Activated CD4-positive, alpha-beta T cell treated with anti-CD3 and anti-CD28 coated beads, Interleukin-2, amount 10 ng/mL, durations not matched to agents 24 days and 14 days (primary cell): ENCODE measurements at regions of chr11 and their contacts with region 1.

Region 1: GRCh38 chr11:5767056-5767455 is 13.0 kb downstream of the OR52N4 start:
- DNase-seq: no peak
- H3K4me3 Mint-ChIP-seq: no peak overlapping the region
- H3K27ac Mint-ChIP-seq: no peak overlapping the region
- H3K4me1 Mint-ChIP-seq: no peaks in the 10 kb centered on the region
- H3K27me3 Mint-ChIP-seq: no peaks in the 10 kb centered on the region

Region 2: GRCh38 chr11:5591613-5592012 is 175.4 kb before region 1 on chr11:
- intact Hi-C with region 1: no loop called
- DNase-seq: no peak
- H3K4me3 Mint-ChIP-seq: no peak overlapping the region
- H3K27ac Mint-ChIP-seq: no peak overlapping the region
- H3K4me1 Mint-ChIP-seq: peaks cover 2% of the 10 kb centered on the region
- H3K27me3 Mint-ChIP-seq: no peaks in the 10 kb centered on the region

Region 3: DNA sequence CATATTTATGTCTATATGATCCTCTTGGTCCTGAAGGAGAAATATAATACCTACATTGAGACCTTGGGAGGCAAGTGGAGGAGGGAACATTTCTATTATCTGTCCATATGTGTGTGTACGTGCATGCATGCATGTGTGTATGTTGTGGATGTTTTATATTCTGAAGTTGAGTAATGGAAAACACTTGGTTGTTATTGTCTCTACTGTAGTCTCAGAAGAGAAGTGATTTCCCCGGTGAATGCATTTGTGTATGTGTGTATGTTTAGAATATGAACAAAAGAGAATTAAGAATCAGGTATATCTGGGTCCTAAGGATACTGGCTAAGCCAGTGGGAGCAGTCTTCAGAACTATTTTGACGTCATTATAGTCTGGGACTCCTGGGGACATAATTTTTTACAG is 24.1 kb after region 1 on chr11 and contains the start of gene OR52N1:
- intact Hi-C with region 1: loop called (anchors 1 kb)
- DNase-seq: no peak
- H3K4me3 Mint-ChIP-seq: no peak within 1 kb of the TSS
- H3K27ac Mint-ChIP-seq: no peak within 1 kb of the TSS
- H3K4me1 Mint-ChIP-seq: no peaks in the 10 kb centered on the region
- H3K27me3 Mint-ChIP-seq: peaks cover 8% of the 10 kb centered on the region
- total RNA-seq, gene OR52N1: not detected in 2 replicates